ENCODE measurements at regions of chr9 and their contacts with region 1.

Region 1: DNA sequence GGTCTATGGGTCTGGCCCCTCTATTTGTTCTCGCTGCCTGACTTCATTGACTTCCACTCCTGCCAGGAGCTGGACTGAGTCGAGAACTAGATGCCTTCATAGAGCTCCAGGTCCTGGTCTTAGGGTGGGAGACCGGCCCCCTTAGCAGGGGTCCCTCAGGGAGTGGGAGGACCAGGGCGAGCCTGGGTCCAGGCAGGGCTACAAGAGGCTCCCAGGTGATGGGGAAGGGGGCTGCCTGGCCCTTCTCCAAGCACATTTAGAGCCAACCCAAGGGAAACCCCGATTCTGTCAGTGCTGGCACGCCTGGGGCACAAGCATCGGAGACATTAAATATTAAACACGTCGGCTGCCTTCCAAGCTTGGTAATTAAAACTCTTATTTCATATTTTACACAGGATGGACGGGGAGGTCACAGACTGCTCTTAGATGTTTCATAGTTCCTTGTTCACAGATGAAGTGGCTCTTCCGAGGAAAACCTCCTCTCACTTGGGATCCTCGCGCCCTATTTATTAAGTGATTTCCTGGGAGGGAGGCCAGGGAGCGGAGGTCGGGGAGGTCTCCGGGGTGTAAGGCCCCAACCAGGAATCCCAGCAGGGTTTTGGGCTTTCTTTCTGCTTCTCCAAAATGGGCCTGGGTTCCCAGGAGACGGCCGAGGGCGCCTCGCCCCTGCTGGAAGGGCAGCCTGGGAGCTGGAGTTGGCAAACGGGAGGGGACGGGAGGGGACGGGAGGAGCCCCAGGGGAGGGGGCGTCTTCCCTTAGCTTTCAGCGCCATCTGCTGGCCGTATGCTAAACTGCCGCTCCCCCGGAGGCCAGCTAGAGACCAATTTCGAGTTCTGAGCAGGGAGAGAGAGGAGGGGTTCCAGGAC is 23.4 kb upstream of the ZBTB43 start:
- DNase-seq: peak; percentile 76 to 78 (median 77)
- ATAC-seq: peak; percentile 91 to 96 (median 95)
- H3K4me3 ChIP-seq: no peak overlapping the region
- H3K27ac ChIP-seq: no peak overlapping the region
- H3K4me1 ChIP-seq: peaks cover 0 to 2% (median 0%) of the 10 kb centered on the region in 4 donors
- H3K27me3 ChIP-seq: no peaks in the 10 kb centered on the region
- CTCF ChIP-seq: peak; percentile 87 to 99 (median 96)
- POLR2A ChIP-seq: no peak

Region 2: GRCh38 chr9:126704873-126705766 is 76.3 kb before region 1 on chr9:
- intact Hi-C with region 1: loop called (anchors 5 kb)
- DNase-seq: peak; percentile 32 to 77 (median 69)
- ATAC-seq: peak; percentile 66 to 87 (median 84)
- H3K4me3 ChIP-seq: no peak overlapping the region
- H3K27ac ChIP-seq: no peak overlapping the region
- H3K4me1 ChIP-seq: peaks cover 0 to 4% (median 0%) of the 10 kb centered on the region in 4 donors
- H3K27me3 ChIP-seq: peaks cover 4 to 13% of the 10 kb centered on the region in 2 donors
- CTCF ChIP-seq: peak; percentile 80 to 86 (median 83)
- POLR2A ChIP-seq: no peak

Region 3: DNA sequence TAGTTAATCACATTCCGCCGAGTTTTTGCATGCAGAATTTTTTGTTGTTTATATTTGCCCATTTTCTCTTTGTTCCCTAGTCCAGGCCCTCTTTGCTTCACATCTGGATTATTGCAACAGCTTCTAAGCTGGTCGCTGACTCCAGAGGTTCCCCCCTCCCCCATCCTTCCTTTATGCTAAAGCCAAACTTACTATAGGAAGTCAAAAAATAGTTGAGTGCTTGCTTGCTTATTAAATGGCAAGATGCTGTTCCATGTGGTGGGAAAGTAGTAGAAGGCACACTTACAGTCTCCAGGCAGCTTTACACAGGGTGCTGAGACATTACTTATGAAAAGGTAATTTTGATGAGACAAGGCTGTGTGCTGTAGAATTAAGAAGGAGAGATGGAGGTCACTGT is 80.3 kb after region 1 on chr9:
- intact Hi-C with region 1: no loop called
- DNase-seq: no peak
- ATAC-seq: no peak
- H3K4me3 ChIP-seq: peak overlapping the region; percentile 54 to 94 (median 90)
- H3K27ac ChIP-seq: peak overlapping the region in 2 of 3 donors; percentile 45 to 94
- H3K4me1 ChIP-seq: peaks cover 0 to 21% (median 5%) of the 10 kb centered on the region in 4 donors
- H3K27me3 ChIP-seq: no peaks in the 10 kb centered on the region
- CTCF ChIP-seq: no peak
- POLR2A ChIP-seq: no peak